CD8-positive, alpha-beta T cell (primary cell): ENCODE measurements at regions of chr14 and their contacts with region 1.

Region 1: GRCh38 chr14:68487805-68488590 is 304.9 kb downstream of the ZFP36L1 start:
- DNase-seq: no peak
- ATAC-seq: no peak
- H3K4me3 ChIP-seq: no peak overlapping the region
- H3K4me3 Mint-ChIP-seq: no peak overlapping the region
- H3K27ac ChIP-seq: no peak overlapping the region
- H3K27ac Mint-ChIP-seq: no peak overlapping the region
- H3K4me1 ChIP-seq: peaks cover 28% of the 10 kb centered on the region
- H3K4me1 Mint-ChIP-seq: peaks cover 43% of the 10 kb centered on the region
- H3K27me3 ChIP-seq: no peaks in the 10 kb centered on the region
- H3K27me3 Mint-ChIP-seq: no peaks in the 10 kb centered on the region
- CTCF ChIP-seq: no peak

Region 2: DNA sequence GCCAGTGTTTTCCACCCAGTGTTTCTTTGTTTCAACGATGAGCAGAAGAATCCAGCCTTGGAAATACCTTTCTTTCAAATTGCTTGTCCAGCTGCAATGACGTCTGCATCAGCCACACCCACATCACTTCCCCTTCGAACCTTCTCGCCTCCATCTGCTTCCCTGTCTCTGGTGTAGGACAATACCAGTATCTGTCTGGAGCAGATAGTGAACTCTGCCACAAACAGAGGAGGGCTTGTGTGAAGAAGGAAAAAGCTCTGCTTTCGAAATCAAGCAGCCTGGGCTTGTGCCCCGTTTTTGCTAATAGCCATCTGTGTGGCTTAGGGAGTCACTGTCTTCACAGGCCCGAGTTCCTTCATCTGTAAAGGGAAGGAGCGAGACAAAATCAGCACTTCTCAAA is 110.5 kb before region 1 on chr14:
- CTCF ChIA-PET with region 1: no interaction called
- POLR2A ChIA-PET with region 1: no interaction called
- intact Hi-C with region 1: loop called in 1 of 2 experiments (anchors 10 kb)
- DNase-seq: peak in 2 of 9 experiments; percentile 6 to 45
- ATAC-seq: no peak
- H3K4me3 ChIP-seq: no peak overlapping the region
- H3K4me3 Mint-ChIP-seq: no peak overlapping the region
- H3K27ac ChIP-seq: peak overlapping the region in 1 of 2 experiments; percentile 32
- H3K27ac Mint-ChIP-seq: peak overlapping the region; percentile 74
- H3K4me1 ChIP-seq: peaks cover 61% of the 10 kb centered on the region
- H3K4me1 Mint-ChIP-seq: peaks cover 68% of the 10 kb centered on the region
- H3K27me3 ChIP-seq: no peaks in the 10 kb centered on the region
- H3K27me3 Mint-ChIP-seq: no peaks in the 10 kb centered on the region
- CTCF ChIP-seq: no peak

Region 3: GRCh38 chr14:68451696-68452373 is 36.2 kb before region 1 on chr14:
- CTCF ChIA-PET with region 1: no interaction called
- POLR2A ChIA-PET with region 1: no interaction called
- intact Hi-C with region 1: no loop called
- DNase-seq: no peak
- ATAC-seq: no peak
- H3K4me3 ChIP-seq: no peak overlapping the region
- H3K4me3 Mint-ChIP-seq: no peak overlapping the region
- H3K27ac ChIP-seq: no peak overlapping the region
- H3K27ac Mint-ChIP-seq: no peak overlapping the region
- H3K4me1 ChIP-seq: no peaks in the 10 kb centered on the region
- H3K4me1 Mint-ChIP-seq: no peaks in the 10 kb centered on the region
- H3K27me3 ChIP-seq: no peaks in the 10 kb centered on the region
- H3K27me3 Mint-ChIP-seq: no peaks in the 10 kb centered on the region
- CTCF ChIP-seq: no peak